ENCODE measurements at regions of chr12 and their contacts with region 1.

Region 1: GRCh38 chr12:55188974-55189556 is 31.8 kb upstream of the OR10A7 start:
- DNase-seq: peak; percentile 72
- ATAC-seq: peak; percentile 69
- H3K4me3 Mint-ChIP-seq: no peak overlapping the region
- H3K27ac Mint-ChIP-seq: no peak overlapping the region
- H3K4me1 Mint-ChIP-seq: no peaks in the 10 kb centered on the region
- H3K27me3 Mint-ChIP-seq: peaks cover 19% of the 10 kb centered on the region

Region 2: GRCh38 chr12:55262587-55262986 is 73.5 kb after region 1 on chr12:
- CTCF ChIA-PET with region 1: no interaction called
- POLR2A ChIA-PET with region 1: no interaction called
- DNase-seq: no peak
- ATAC-seq: no peak
- H3K4me3 Mint-ChIP-seq: no peak overlapping the region
- H3K27ac Mint-ChIP-seq: no peak overlapping the region
- H3K4me1 Mint-ChIP-seq: no peaks in the 10 kb centered on the region
- H3K27me3 Mint-ChIP-seq: peaks cover 11% of the 10 kb centered on the region

Region 3: GRCh38 chr12:55619354-55620138 is 430.5 kb after region 1 on chr12:
- CTCF ChIA-PET with region 1: interaction called, 12 read pairs
- POLR2A ChIA-PET with region 1: no interaction called
- DNase-seq: peak; percentile 73
- ATAC-seq: peak; percentile 88
- H3K4me3 Mint-ChIP-seq: no peak overlapping the region
- H3K27ac Mint-ChIP-seq: no peak overlapping the region
- H3K4me1 Mint-ChIP-seq: no peaks in the 10 kb centered on the region
- H3K27me3 Mint-ChIP-seq: peaks cover 14% of the 10 kb centered on the region

Measured in activated CD8-positive, alpha-beta T cell treated with anti-CD3 and anti-CD28 coated beads, Interleukin-2, amount 10 ng/mL, durations not matched to agents 7 days and 5 days (primary cell).